ENCODE measurements at regions of chr17 and their contacts with region 1.

Region 1: GRCh38 chr17:56893216-56893863 is 20.5 kb downstream of the TRIM25 start:
- DNase-seq: no peak
- ATAC-seq: no peak
- H3K4me3 ChIP-seq: no peak overlapping the region
- H3K27ac ChIP-seq: no peak overlapping the region
- H3K4me1 ChIP-seq: peaks cover 14% of the 10 kb centered on the region
- H3K27me3 ChIP-seq: no peaks in the 10 kb centered on the region
- CTCF ChIP-seq: no peak
- EP300 ChIP-seq: no peak
- POLR2A ChIP-seq: no peak
- RAD21 ChIP-seq: no peak

Region 2: GRCh38 chr17:56638591-56639051 is 254.7 kb before region 1 on chr17:
- CTCF ChIA-PET with region 1: no interaction called
- POLR2A ChIA-PET with region 1: no interaction called
- RAD21 ChIA-PET with region 1: no interaction called
- SMC1A ChIA-PET with region 1: no interaction called
- in situ Hi-C with region 1: no loop called
- intact Hi-C with region 1: no loop called
- DNase-seq: no peak
- ATAC-seq: no peak
- H3K4me3 ChIP-seq: no peak overlapping the region
- H3K27ac ChIP-seq: no peak overlapping the region
- H3K4me1 ChIP-seq: no peaks in the 10 kb centered on the region
- H3K27me3 ChIP-seq: peaks cover 0 to 2% of the 10 kb centered on the region in 2 experiments; a peak in 1 of 4 replicates
- CTCF ChIP-seq: no peak
- EP300 ChIP-seq: no peak
- POLR2A ChIP-seq: no peak
- RAD21 ChIP-seq: no peak

Region 3: DNA sequence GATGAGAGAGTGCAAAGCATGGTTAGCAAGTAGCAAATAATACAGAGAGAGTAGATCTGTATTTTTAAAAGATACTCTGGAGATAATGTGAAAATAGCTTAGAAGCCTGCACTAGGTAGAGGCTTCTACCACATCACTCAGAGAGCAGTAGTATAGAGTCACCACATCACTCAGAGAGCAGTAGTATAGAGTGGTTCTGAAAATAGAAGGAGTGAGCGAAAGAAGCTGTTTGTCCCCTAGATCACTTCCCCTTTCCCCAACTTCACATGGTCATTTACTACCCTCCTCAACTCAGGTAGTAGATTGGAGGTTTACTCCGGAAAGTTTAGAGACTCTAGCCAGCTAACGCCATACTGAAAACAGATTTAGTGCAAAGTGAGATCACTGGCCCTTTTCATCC is 42.3 kb before region 1 on chr17:
- CTCF ChIA-PET with region 1: no interaction called
- POLR2A ChIA-PET with region 1: no interaction called
- RAD21 ChIA-PET with region 1: no interaction called
- SMC1A ChIA-PET with region 1: no interaction called
- in situ Hi-C with region 1: no loop called
- intact Hi-C with region 1: no loop called
- DNase-seq: no peak
- ATAC-seq: peak; percentile 70
- H3K4me3 ChIP-seq: no peak overlapping the region
- H3K27ac ChIP-seq: no peak overlapping the region
- H3K4me1 ChIP-seq: peaks cover 8% of the 10 kb centered on the region
- H3K27me3 ChIP-seq: no peaks in the 10 kb centered on the region
- CTCF ChIP-seq: no peak
- EP300 ChIP-seq: no peak
- POLR2A ChIP-seq: no peak
- RAD21 ChIP-seq: no peak

Region 4: DNA sequence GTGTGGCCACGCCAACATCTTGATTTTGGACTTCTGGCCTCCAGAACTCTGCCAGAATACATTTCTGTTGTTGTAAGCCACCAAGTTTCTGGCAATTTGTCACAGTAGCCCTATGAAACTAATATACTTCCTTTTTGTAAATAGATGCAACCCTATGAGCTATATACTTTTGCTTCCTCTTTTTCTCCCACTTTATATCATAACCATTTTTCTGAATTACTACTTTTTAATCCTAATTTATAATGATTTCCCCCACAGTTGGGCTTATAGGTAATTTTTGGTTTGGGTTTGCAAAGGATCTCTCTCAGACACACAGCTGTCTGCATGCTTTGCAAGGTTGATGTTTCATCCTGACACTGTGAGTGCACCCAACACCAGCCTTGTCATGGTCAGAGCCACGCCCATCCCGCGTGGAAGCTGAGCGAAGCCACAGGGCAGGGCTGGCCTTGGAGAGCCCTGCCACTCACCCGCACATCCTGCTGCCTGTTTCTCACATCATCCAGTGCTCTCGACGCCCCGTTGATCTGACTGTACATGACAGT is 14.7 kb after region 1 on chr17:
- CTCF ChIA-PET with region 1: no interaction called
- POLR2A ChIA-PET with region 1: interaction called, 4 read pairs
- RAD21 ChIA-PET with region 1: interaction called, 4 read pairs
- SMC1A ChIA-PET with region 1: interaction called, 11 read pairs
- in situ Hi-C with region 1: no loop called
- intact Hi-C with region 1: no loop called
- DNase-seq: peak; percentile 60
- ATAC-seq: peak; percentile 88
- H3K4me3 ChIP-seq: peak overlapping the region; percentile 79; the same call in 1 of the 2 replicates
- H3K27ac ChIP-seq: peak overlapping the region; percentile 42
- H3K4me1 ChIP-seq: peaks cover 24% of the 10 kb centered on the region
- H3K27me3 ChIP-seq: no peaks in the 10 kb centered on the region
- CTCF ChIP-seq: no peak
- EP300 ChIP-seq: no peak
- POLR2A ChIP-seq: no peak
- RAD21 ChIP-seq: no peak